ENCODE measurements at regions of chr5 and their contacts with region 1.

Region 1: DNA sequence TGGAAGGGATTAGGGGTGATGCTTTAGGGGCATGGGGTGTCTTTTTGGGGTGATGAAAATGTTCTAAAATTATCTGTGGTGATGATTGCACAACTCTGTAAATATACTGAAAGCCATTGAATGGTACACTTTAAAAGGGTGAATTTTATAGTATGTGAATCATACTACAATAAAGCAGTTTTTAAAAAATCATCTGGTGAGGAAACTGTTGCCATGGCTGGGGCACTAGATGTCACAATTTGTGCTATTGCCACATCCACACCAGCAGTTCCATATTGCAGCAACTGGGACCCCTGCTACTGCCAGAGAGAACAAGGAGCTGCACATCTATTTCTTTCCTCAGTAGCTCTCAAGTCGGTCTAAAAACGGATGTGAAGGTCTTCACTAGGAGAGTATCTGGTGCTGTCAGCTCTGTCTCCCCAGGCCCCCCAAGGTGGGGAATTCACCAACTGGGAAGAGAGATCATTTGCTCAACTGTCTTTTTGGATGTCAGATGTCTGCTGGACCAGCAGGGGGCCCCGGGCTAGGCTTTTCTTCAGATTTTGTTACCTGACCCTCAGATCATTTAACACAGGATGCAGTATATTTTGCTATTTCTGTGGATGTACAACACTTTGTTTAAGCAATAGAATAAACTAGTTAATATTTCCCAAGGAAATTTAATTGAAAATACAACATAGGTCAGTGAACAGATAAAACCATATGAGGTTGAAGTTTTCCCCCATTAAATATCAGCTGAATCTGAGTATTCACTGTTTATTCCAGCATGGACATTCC is 13.2 kb downstream of the CMYA5 start:
- DNase-seq: peak; percentile 74
- H3K4me3 Mint-ChIP-seq: no peak overlapping the region
- H3K27ac Mint-ChIP-seq: peak overlapping the region; percentile 60
- H3K4me1 Mint-ChIP-seq: peaks cover 71% of the 10 kb centered on the region
- H3K27me3 Mint-ChIP-seq: no peaks in the 10 kb centered on the region
- CTCF ChIP-seq: peak; percentile 82

Region 2: GRCh38 chr5:79672392-79672791 is 30.4 kb before region 1 on chr5:
- CTCF ChIA-PET with region 1: no interaction called
- intact Hi-C with region 1: no loop called
- DNase-seq: no peak
- H3K4me3 Mint-ChIP-seq: no peak overlapping the region
- H3K27ac Mint-ChIP-seq: no peak overlapping the region
- H3K4me1 Mint-ChIP-seq: peaks cover 14% of the 10 kb centered on the region
- H3K27me3 Mint-ChIP-seq: no peaks in the 10 kb centered on the region
- CTCF ChIP-seq: no peak

Region 3: DNA sequence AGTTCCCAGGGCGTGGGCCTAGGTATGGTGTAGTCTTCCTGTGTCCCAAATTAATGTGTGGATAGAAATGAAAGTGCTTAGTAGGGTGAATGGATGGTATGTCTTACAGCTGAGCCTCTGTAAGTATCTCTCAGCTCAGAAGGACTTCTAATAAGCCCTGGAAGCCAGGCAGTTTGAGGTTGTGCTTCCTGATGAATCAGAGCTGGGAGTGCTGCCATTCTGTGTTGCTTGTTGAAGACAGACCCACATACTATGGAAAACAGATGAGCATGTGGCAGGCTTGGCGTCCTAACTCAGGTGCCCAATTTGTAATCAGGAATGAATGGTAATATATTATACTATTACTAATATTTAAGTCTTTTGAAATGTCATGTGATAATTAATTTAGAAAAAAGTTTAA is 56.6 kb after region 1 on chr5:
- CTCF ChIA-PET with region 1: no interaction called
- intact Hi-C with region 1: no loop called
- DNase-seq: no peak
- H3K4me3 Mint-ChIP-seq: no peak overlapping the region
- H3K27ac Mint-ChIP-seq: no peak overlapping the region
- H3K4me1 Mint-ChIP-seq: peaks cover 9% of the 10 kb centered on the region
- H3K27me3 Mint-ChIP-seq: no peaks in the 10 kb centered on the region
- CTCF ChIP-seq: no peak

Region 4: DNA sequence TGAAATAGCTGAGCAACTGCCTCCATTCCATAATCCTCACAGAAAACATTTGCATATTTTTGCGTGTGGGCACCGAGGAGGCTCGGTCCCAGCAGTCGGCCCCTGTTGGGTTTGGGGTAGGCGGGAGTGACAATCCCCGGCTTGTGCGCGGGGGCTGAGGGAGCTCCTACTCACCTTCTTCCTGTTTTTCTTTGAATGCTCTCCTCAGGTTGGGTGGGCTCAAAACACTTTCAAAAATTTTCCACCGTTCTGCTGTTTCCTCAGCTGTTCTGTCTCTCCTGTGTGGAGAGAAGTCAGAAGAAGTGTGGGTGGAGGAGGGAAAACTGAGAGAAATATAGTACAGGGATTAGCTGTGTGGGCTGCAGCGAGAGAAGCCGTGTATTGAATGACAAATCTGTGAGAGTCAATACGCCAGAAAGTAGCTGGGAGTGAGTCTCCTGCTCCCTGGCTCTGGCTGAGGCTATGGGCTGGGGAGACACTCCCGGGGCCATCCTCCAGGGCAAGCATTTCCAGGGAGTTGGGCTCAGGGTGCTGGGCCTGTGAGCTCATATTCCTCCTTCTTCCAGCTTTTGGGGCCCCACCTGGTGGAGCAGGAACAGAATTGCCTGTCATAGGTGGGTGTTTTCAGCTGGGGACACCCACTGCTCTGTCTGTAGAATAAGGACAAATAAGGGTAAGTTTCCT is 71.5 kb after region 1 on chr5:
- CTCF ChIA-PET with region 1: interaction called, 9 read pairs
- intact Hi-C with region 1: loop called (anchors 5 kb)
- DNase-seq: peak; percentile 75
- H3K4me3 Mint-ChIP-seq: no peak overlapping the region
- H3K27ac Mint-ChIP-seq: no peak overlapping the region
- H3K4me1 Mint-ChIP-seq: no peaks in the 10 kb centered on the region
- H3K27me3 Mint-ChIP-seq: peaks cover under 1% of the 10 kb centered on the region
- CTCF ChIP-seq: peak; percentile 46

Region 5: GRCh38 chr5:79857714-79858409 is 155.1 kb after region 1 on chr5:
- CTCF ChIA-PET with region 1: interaction called, 4 read pairs
- intact Hi-C with region 1: loop called (anchors 1 kb)
- DNase-seq: peak; percentile 83
- H3K4me3 Mint-ChIP-seq: no peak overlapping the region
- H3K27ac Mint-ChIP-seq: no peak overlapping the region
- H3K4me1 Mint-ChIP-seq: no peaks in the 10 kb centered on the region
- H3K27me3 Mint-ChIP-seq: no peaks in the 10 kb centered on the region
- CTCF ChIP-seq: peak; percentile 97